ENCODE measurements at regions of chr18 and their contacts with region 1.

Region 1: DNA sequence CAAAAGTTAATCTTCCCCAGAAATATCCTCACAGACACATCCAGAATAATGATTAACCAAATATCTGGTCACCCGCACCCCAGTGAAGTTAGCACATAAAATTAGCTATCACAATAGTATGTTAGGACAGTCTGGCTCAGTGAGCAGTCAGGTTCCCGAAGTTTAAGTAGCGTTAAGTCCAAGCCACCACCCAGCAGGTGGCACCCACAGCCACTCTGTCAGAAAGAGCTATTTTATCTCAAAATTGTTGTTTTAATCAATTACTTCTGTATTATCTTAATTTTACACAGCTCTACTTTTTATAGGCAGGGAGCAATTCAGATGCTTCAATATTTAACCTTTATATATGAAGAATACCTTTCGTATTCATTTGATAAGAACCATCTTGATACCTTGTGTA is 537.5 kb downstream of the MBD2 start:
- DNase-seq: peak; percentile 35
- ATAC-seq: peak; percentile 62; the same call in 1 of the 2 replicates
- H3K4me3 ChIP-seq: no peak overlapping the region
- H3K27ac ChIP-seq: no peak overlapping the region
- H3K4me1 ChIP-seq: no peaks in the 10 kb centered on the region
- H3K27me3 ChIP-seq: peaks cover 72% of the 10 kb centered on the region
- CTCF ChIP-seq: peak; percentile 64

Region 2: DNA sequence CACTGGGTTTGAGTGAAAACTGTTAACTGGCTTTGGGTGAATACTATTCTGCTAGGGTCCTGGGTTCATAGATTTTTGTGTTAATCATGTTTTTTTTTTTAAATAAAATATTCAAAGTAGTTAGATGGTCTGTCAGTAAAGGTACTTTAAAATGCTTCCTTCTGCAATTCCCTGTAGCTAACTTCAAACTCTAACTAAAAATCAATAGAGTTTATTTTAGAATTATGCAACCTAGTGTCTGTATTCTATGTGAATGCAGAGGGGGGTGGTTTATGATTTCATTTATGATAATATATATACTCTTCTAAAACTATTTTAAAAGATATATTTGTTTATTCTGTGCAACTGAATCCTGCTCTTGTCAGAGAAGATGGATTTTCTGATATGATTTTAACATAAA is 642.8 kb after region 1 on chr18:
- CTCF ChIA-PET with region 1: no interaction called
- POLR2A ChIA-PET with region 1: interaction called, 13 read pairs
- intact Hi-C with region 1: no loop called
- DNase-seq: no peak
- ATAC-seq: no peak
- H3K4me3 ChIP-seq: no peak overlapping the region
- H3K27ac ChIP-seq: no peak overlapping the region
- H3K4me1 ChIP-seq: no peaks in the 10 kb centered on the region
- H3K27me3 ChIP-seq: no peaks in the 10 kb centered on the region
- CTCF ChIP-seq: no peak